ENCODE measurements at regions of chr15 and their contacts with region 1.

Region 1: GRCh38 chr15:85485956-85486567 is 105.7 kb downstream of the AKAP13 start:
- DNase-seq: peak; percentile 81
- H3K4me3 ChIP-seq: no peak overlapping the region
- H3K27ac ChIP-seq: no peak overlapping the region
- H3K4me1 ChIP-seq: peaks cover 76% of the 10 kb centered on the region
- CTCF ChIP-seq: peak; percentile 91

Region 2: DNA sequence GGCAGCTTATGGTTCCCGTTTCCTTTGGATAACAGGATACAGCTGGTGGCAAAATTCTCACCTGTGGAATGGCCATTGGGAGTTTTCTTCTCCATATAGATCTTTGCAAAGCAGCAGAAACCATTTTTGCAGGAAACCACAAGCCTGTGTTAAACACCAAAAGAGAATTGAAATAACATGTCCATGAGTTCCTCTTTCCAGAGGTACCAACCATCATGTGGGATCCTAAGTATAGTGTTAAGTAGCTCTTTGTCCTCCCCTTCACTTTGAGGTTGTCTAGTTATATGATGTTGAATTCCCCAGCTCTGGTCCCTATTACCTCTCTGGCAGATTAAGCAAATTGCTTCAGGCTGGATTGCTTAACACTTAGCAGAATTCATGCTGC is 10.8 kb before region 1 on chr15:
- CTCF ChIA-PET with region 1: interaction called, 3 read pairs
- POLR2A ChIA-PET with region 1: interaction called, 18 read pairs
- intact Hi-C with region 1: no loop called
- DNase-seq: peak; percentile 85
- H3K4me3 ChIP-seq: peak overlapping the region; percentile 52
- H3K27ac ChIP-seq: peak overlapping the region; percentile 92
- H3K4me1 ChIP-seq: peaks cover 99% of the 10 kb centered on the region
- CTCF ChIP-seq: no peak

Region 3: GRCh38 chr15:85543741-85544155 is 57.7 kb after region 1 on chr15:
- CTCF ChIA-PET with region 1: no interaction called
- POLR2A ChIA-PET with region 1: interaction called, 3 read pairs
- intact Hi-C with region 1: loop called (anchors 5 kb)
- DNase-seq: no peak
- H3K4me3 ChIP-seq: no peak overlapping the region
- H3K27ac ChIP-seq: no peak overlapping the region
- H3K4me1 ChIP-seq: peaks cover 25% of the 10 kb centered on the region
- CTCF ChIP-seq: no peak

Region 4: DNA sequence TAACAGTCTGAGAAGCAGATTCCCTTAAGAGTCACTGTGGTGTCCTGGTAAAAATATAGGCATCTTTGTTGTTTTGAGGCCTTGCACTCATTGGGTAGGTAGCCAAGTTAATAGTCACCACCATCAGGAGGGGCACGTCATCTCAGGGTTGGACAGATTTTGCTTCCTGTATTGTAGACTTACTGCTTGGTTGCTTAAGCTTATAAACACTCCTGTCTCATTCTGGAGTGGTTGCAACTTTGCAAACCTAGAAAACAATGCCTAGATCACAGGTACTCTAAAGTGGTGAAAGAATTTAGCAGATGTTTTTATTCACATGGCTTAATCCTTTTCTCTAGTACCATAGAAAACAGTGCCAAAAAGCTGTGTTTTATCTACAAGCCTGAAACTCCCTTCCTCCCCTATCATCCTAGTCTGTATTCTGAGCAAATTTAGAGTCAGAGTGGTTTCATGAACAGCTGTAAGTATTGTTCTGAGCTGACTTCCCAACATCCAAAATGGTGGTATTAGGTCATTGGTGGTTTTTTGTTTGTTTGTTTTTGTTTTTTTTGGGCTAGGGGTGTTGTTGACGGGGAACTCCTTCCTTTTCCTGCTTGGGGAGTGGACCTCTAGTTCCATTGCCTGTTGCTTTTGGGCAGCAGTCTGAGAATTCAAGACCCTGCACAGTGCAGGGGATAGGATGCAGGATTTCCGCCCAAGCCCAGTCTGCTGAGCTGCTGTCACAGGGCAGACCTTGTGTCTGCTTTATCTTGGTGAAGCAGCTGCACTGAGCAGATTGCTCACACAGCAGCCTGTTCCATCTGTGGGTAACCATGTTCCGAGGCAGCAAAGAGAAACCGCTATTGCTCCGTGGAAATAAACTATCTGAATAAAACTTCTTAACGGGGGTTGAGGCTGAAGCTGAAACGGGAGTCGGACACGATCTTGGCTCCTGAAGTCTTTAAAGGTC is 96.3 kb after region 1 on chr15:
- CTCF ChIA-PET with region 1: no interaction called
- POLR2A ChIA-PET with region 1: no interaction called
- intact Hi-C with region 1: loop called (anchors 5 kb)
- DNase-seq: peak; percentile 78
- H3K4me3 ChIP-seq: peak overlapping the region; percentile 59
- H3K27ac ChIP-seq: peak overlapping the region; percentile 61
- H3K4me1 ChIP-seq: peaks cover 50% of the 10 kb centered on the region
- CTCF ChIP-seq: no peak

Region 5: GRCh38 chr15:85672332-85673084 is 186.4 kb after region 1 on chr15:
- CTCF ChIA-PET with region 1: no interaction called
- POLR2A ChIA-PET with region 1: no interaction called
- intact Hi-C with region 1: no loop called
- DNase-seq: no peak
- H3K4me3 ChIP-seq: no peak overlapping the region
- H3K27ac ChIP-seq: no peak overlapping the region
- H3K4me1 ChIP-seq: no peaks in the 10 kb centered on the region
- CTCF ChIP-seq: no peak

Region 6: DNA sequence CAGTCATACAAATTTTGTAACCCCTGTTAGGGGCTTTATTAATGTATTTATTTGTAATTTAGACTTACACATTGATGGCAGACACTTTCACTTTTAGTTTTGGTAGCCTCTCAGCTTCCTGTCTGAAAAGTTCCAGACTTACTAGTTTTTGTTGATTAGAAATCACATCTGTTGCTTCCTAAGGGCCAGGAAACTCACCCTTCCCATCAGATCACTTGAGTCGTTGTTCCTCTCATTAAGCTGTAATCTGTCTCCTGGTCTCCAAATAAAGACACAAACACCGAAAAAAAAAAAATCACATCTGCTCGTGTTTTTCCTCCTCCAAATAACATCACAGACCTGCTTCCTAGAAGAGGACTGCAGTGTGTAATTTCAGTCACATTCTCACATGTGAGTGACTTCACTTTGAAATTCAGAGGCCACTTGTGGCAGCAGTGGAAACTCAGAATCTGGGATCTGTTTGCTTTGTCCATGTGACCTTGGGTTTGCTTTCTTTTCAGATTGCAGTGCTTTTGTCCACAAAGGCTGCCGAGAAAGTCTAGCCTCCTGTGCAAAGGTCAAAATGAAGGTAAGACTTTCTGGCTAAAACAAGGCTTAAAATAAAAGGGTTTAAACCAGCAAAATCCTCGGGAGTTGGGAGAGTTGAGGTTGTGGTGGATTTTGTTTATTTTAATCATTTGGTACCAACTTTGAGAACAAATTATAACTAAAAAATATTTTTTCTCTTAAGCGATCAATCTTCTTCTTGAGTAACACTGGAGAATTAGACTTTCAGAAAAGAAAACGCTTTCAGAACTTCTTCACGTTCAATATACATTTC is 221.7 kb after region 1 on chr15:
- CTCF ChIA-PET with region 1: no interaction called
- POLR2A ChIA-PET with region 1: no interaction called
- intact Hi-C with region 1: loop called (anchors 5 kb)
- DNase-seq: peak; percentile 63
- H3K4me3 ChIP-seq: peak overlapping the region; percentile 63
- H3K27ac ChIP-seq: peak overlapping the region; percentile 90
- H3K4me1 ChIP-seq: peaks cover 59% of the 10 kb centered on the region
- CTCF ChIP-seq: no peak

Measured in OCI-LY7 (cell line).